Activated CD4-positive, alpha-beta T cell treated with anti-CD3 and anti-CD28 coated beads for 36 hours (primary cell): ENCODE measurements at regions of chr10 and their contacts with region 1.

Region 1: GRCh38 chr10:47311932-47312662 is 10.2 kb upstream of the GDF2 start:
- DNase-seq: peak; percentile 93
- ATAC-seq: peak; percentile 96
- H3K4me3 Mint-ChIP-seq: no peak overlapping the region
- H3K27ac Mint-ChIP-seq: peak overlapping the region; percentile 58
- H3K4me1 Mint-ChIP-seq: peaks cover 22% of the 10 kb centered on the region
- H3K27me3 Mint-ChIP-seq: no peaks in the 10 kb centered on the region

Region 2: DNA sequence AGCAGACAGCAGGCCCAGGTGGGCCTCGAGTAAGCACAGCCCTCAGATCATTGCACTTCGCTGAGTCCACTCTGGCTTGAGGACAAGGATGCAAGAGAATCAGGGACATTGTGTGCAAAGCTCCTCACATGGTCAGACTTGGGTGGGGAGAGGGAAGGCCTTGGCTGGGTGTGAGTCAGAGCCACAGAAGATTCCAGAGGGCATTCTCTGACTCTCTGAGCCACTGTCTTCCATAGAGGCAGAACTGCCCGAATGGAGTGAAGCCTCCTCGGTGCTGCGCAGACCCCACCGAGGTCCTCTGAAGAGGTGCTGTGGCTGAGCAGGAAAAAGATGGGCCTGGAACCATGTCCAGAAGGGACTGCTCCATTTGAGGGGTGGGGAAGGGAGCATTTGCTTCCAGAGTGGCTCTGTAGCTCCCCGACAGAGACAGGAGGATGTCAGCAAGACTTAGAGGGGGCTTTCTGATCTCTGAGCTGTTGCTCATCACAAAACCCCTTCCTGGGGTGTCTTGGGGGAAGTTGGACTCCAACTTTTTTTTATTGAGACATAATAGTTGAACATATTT is 280.1 kb before region 1 on chr10:
- CTCF ChIA-PET with region 1: interaction called, 45 read pairs
- POLR2A ChIA-PET with region 1: no interaction called
- intact Hi-C with region 1: no loop called
- DNase-seq: no peak
- ATAC-seq: no peak
- H3K4me3 Mint-ChIP-seq: no peak overlapping the region
- H3K27ac Mint-ChIP-seq: no peak overlapping the region
- H3K4me1 Mint-ChIP-seq: no peaks in the 10 kb centered on the region
- H3K27me3 Mint-ChIP-seq: no peaks in the 10 kb centered on the region

Region 3: DNA sequence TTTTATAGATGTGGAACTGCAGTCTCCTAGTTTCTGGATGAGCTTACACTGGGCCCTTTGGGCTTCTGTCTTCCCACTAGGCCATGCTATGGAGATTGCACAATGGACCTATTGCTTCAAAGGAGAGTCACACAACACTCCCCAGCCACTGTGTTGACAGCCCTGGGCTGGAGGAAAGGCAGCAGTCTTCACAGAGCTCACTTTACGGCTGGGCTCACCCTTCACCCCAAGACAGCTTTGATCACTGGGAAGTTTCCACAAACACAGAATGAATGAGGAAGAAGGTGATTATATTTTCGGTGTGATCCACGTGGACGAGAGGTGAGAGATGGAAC is 104.8 kb before region 1 on chr10:
- CTCF ChIA-PET with region 1: interaction called, 4 read pairs
- POLR2A ChIA-PET with region 1: no interaction called
- intact Hi-C with region 1: loop called in 1 of 2 experiments (anchors 10 kb)
- DNase-seq: peak; percentile 31
- ATAC-seq: peak; percentile 67
- H3K4me3 Mint-ChIP-seq: peak overlapping the region; percentile 38
- H3K27ac Mint-ChIP-seq: peak overlapping the region; percentile 79
- H3K4me1 Mint-ChIP-seq: peaks cover 57% of the 10 kb centered on the region
- H3K27me3 Mint-ChIP-seq: no peaks in the 10 kb centered on the region

Region 4: DNA sequence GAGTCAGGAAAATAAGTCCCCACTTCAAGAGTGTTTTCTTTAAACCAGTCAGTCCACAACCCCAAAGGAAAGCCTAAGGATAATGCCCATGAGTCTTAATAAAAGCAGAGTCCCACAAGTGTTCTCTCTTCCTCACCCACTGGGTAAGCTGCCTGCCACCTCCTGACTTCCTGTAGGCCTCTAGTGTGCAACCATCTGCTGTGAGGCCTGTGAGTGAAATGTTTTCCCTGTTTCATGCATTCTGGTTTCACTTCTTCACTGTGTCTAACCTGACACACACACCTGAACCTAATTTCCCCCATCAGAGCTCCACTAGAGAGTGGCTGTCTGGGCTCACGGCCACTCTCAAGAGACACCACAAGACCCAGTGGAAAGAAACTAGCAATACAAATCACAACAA is 51.0 kb before region 1 on chr10:
- CTCF ChIA-PET with region 1: interaction called, 3 read pairs
- POLR2A ChIA-PET with region 1: no interaction called
- intact Hi-C with region 1: loop called in 1 of 2 experiments (anchors 5 kb)
- DNase-seq: peak; percentile 60
- ATAC-seq: peak; percentile 57
- H3K4me3 Mint-ChIP-seq: peak overlapping the region; percentile 23
- H3K27ac Mint-ChIP-seq: peak overlapping the region; percentile 97
- H3K4me1 Mint-ChIP-seq: peaks cover 94% of the 10 kb centered on the region
- H3K27me3 Mint-ChIP-seq: no peaks in the 10 kb centered on the region

Region 5: GRCh38 chr10:47340608-47341170 is 28.6 kb after region 1 on chr10:
- CTCF ChIA-PET with region 1: interaction called, 4 read pairs
- POLR2A ChIA-PET with region 1: no interaction called
- intact Hi-C with region 1: loop called in 1 of 2 experiments (anchors 2 kb)
- DNase-seq: peak; percentile 84
- ATAC-seq: peak; percentile 55
- H3K4me3 Mint-ChIP-seq: no peak overlapping the region
- H3K27ac Mint-ChIP-seq: no peak overlapping the region
- H3K4me1 Mint-ChIP-seq: no peaks in the 10 kb centered on the region
- H3K27me3 Mint-ChIP-seq: peaks cover 4% of the 10 kb centered on the region